ENCODE measurements at regions of chr14 and their contacts with region 1.

Region 1: DNA sequence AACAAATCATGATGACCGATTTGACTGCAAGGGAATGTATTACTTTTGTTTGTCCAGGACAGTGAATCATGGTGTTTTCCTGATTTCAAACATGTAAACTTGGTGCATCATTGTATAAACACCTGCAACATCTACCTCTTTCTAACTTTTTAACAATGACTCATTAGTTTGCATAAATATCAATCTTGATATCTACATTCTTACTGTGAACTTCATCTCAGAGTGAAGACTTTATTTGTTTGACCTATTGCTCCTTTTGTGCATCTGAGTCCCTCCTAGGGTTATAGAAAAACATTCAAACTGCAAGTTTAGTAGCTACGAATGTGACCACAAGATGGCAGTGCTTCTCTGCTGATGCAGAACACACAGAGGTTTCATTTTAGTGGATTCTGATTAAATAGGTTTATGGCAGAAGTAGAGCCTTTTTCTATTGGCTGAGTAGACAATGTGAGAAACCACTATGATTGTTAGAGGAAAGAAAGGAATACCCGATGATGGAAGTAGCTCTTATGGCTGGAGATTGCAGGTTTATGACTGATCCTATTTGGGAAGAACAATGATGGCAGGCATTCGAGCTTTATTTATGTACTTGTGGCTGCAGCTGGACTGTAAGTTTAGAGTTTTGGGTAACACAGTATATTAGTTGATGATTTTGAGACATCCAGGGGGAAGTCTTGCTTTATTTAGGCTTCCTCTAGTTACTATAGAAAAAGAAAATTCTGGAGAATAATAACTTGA is 244.2 kb upstream of the OR4E1 start:
- DNase-seq: peak in 4 of 5 donors; percentile 15 to 64 (median 52)
- H3K4me3 ChIP-seq: peak overlapping the region; percentile 24
- H3K4me3 Mint-ChIP-seq: peak overlapping the region; percentile 68 to 86 (median 81)
- H3K27ac ChIP-seq: no peak overlapping the region
- H3K27ac Mint-ChIP-seq: peak overlapping the region; percentile 42 to 94 (median 80)
- H3K4me1 ChIP-seq: peaks cover 34% of the 10 kb centered on the region
- H3K4me1 Mint-ChIP-seq: peaks cover 35 to 59% (median 48%) of the 10 kb centered on the region in 3 donors
- H3K27me3 ChIP-seq: no peaks in the 10 kb centered on the region
- H3K27me3 Mint-ChIP-seq: no peaks in the 10 kb centered on the region

Region 2: GRCh38 chr14:21902650-21903103 is 15.2 kb before region 1 on chr14:
- CTCF ChIA-PET with region 1: interaction called, 14 read pairs
- POLR2A ChIA-PET with region 1: no interaction called
- DNase-seq: peak in 1 of 5 donors; percentile 38
- H3K4me3 ChIP-seq: no peak overlapping the region
- H3K4me3 Mint-ChIP-seq: peak overlapping the region; percentile 41 to 85 (median 66)
- H3K27ac ChIP-seq: no peak overlapping the region
- H3K27ac Mint-ChIP-seq: peak overlapping the region; percentile 29 to 83 (median 58)
- H3K4me1 ChIP-seq: peaks cover 4% of the 10 kb centered on the region
- H3K4me1 Mint-ChIP-seq: peaks cover 8 to 11% (median 10%) of the 10 kb centered on the region in 3 donors
- H3K27me3 ChIP-seq: no peaks in the 10 kb centered on the region
- H3K27me3 Mint-ChIP-seq: peaks cover 0 to 2% of the 10 kb centered on the region in 2 donors

Region 3: GRCh38 chr14:21933681-21934080 is 15.8 kb after region 1 on chr14:
- CTCF ChIA-PET with region 1: interaction called, 12 read pairs
- POLR2A ChIA-PET with region 1: interaction called, 4 read pairs
- DNase-seq: peak in 1 of 5 donors; percentile 18
- H3K4me3 ChIP-seq: no peak overlapping the region
- H3K4me3 Mint-ChIP-seq: no peak overlapping the region
- H3K27ac ChIP-seq: no peak overlapping the region
- H3K27ac Mint-ChIP-seq: no peak overlapping the region
- H3K4me1 ChIP-seq: no peaks in the 10 kb centered on the region
- H3K4me1 Mint-ChIP-seq: peaks cover 0 to 3% (median 3%) of the 10 kb centered on the region in 3 donors
- H3K27me3 ChIP-seq: no peaks in the 10 kb centered on the region
- H3K27me3 Mint-ChIP-seq: peaks cover 2 to 4% of the 10 kb centered on the region in 2 donors

Region 4: GRCh38 chr14:21978184-21978998 is 60.5 kb after region 1 on chr14:
- CTCF ChIA-PET with region 1: interaction called, 10 read pairs
- POLR2A ChIA-PET with region 1: no interaction called
- DNase-seq: peak; percentile 29 to 74 (median 41)
- H3K4me3 ChIP-seq: peak overlapping the region; percentile 15
- H3K4me3 Mint-ChIP-seq: peak overlapping the region; percentile 34 to 84 (median 70)
- H3K27ac ChIP-seq: no peak overlapping the region
- H3K27ac Mint-ChIP-seq: peak overlapping the region in 7 of 8 donors; percentile 17 to 86 (median 58)
- H3K4me1 ChIP-seq: no peaks in the 10 kb centered on the region
- H3K4me1 Mint-ChIP-seq: peaks cover 9 to 23% (median 9%) of the 10 kb centered on the region in 3 donors
- H3K27me3 ChIP-seq: no peaks in the 10 kb centered on the region
- H3K27me3 Mint-ChIP-seq: peaks cover 0 to 4% of the 10 kb centered on the region in 2 donors

Region 5: DNA sequence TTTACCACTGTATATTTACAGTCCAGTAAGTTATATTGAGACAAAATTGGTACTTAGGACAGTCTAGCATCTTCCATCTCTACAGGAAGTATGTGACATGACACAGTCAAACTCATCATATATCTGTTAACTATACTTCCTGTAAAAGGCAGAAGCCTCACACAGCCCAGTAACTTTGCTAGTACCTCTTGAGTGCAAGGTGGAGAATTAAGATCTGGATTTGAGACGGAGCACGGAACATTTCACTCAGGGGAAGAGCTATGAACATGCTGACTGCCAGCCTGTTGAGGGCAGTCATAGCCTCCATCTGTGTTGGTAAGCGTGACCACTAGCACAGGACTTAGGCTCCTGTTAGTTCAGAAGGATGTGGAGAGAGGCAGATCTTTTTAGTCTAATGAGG is 89.5 kb after region 1 on chr14:
- CTCF ChIA-PET with region 1: no interaction called
- POLR2A ChIA-PET with region 1: no interaction called
- DNase-seq: no peak
- H3K4me3 ChIP-seq: peak overlapping the region; percentile 22
- H3K4me3 Mint-ChIP-seq: peak overlapping the region; percentile 78 to 86 (median 82)
- H3K27ac ChIP-seq: no peak overlapping the region
- H3K27ac Mint-ChIP-seq: peak overlapping the region; percentile 76 to 93 (median 83)
- H3K4me1 ChIP-seq: peaks cover 8% of the 10 kb centered on the region
- H3K4me1 Mint-ChIP-seq: peaks cover 13 to 19% (median 17%) of the 10 kb centered on the region in 3 donors
- H3K27me3 ChIP-seq: no peaks in the 10 kb centered on the region
- H3K27me3 Mint-ChIP-seq: peaks cover 0 to 2% of the 10 kb centered on the region in 2 donors